Left lung (tissue), 14 donors: ENCODE measurements at regions of chr10 and their contacts with region 1.

Region 1: GRCh38 chr10:29857843-29858701 is 201.3 kb downstream of the JCAD start:
- DNase-seq: peak in 3 of 4 donors; percentile 65 to 80 (median 69)
- ATAC-seq: peak; percentile 92
- H3K4me3 ChIP-seq: no peak overlapping the region
- H3K27ac ChIP-seq: no peak overlapping the region
- H3K4me1 ChIP-seq: peaks cover 9 to 11% of the 10 kb centered on the region in 2 donors
- H3K27me3 ChIP-seq: no peaks in the 10 kb centered on the region
- CTCF ChIP-seq: peak; percentile 58 to 66

Region 2: GRCh38 chr10:29735596-29736318 is 122.3 kb before region 1 on chr10:
- intact Hi-C with region 1: loop called in 1 of 2 experiments (anchors 10 kb)
- DNase-seq: peak; percentile 84 to 99 (median 90)
- ATAC-seq: peak; percentile 94
- H3K4me3 ChIP-seq: peak overlapping the region; percentile 82 to 88
- H3K27ac ChIP-seq: peak overlapping the region; percentile 97 to 99
- H3K4me1 ChIP-seq: peaks cover 5 to 48% of the 10 kb centered on the region in 2 donors
- H3K27me3 ChIP-seq: no peaks in the 10 kb centered on the region
- CTCF ChIP-seq: peak; percentile 92 to 96

Region 3: DNA sequence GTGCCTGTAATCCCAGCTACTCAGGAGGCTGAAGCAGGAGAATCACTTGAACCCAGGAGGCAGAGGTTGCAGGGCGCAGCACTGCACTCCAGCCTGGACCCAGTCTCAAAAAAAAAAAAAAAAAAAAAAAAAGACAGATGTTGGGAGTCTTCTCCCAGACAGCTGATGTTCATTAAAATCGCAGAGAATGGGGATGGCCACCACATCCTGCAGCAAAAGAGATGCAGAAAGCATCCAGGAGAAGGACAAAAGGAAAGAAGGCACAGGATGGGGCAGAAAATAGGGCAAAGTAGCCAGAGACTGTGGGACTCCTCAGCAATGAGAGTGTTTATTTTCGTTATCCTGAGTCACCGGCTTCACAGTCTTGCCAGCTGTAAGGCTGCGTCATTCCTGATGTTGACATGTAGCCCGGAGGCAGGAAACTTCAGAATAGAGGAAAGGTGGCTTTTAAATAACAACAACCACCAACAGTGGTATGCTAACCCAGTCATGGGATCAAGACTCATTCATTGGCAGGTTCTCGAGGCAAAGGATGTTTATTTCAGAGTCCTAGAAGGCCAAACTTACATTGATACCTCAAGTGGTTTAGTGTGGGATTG is 73.8 kb before region 1 on chr10:
- intact Hi-C with region 1: no loop called
- DNase-seq: peak in 2 of 4 donors; percentile 54 to 65
- ATAC-seq: peak; percentile 96
- H3K4me3 ChIP-seq: no peak overlapping the region
- H3K27ac ChIP-seq: peak overlapping the region; percentile 39 to 50
- H3K4me1 ChIP-seq: peaks cover 0 to 18% of the 10 kb centered on the region in 2 donors
- H3K27me3 ChIP-seq: no peaks in the 10 kb centered on the region
- CTCF ChIP-seq: no peak

Region 4: DNA sequence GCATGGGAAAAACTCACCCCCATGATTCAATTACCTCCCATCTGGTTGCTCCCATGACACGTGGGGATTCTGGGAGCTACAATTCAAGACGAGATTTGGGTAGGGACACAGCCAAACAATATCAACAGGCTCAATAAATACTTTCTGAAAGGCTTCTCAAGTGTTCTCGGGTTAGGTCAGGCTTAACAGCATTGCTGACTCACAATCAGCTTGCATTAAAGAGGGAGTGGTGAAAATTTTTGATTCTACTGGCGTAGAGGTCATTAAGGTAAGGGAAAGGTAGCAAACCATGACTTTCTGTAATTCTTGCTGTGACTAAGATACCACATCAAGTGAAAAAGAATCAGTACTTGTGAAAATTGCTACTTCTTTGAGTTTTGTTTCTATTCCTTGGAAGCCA is 74.9 kb after region 1 on chr10:
- intact Hi-C with region 1: no loop called
- DNase-seq: no peak
- ATAC-seq: no peak
- H3K4me3 ChIP-seq: no peak overlapping the region
- H3K27ac ChIP-seq: no peak overlapping the region
- H3K4me1 ChIP-seq: no peaks in the 10 kb centered on the region
- H3K27me3 ChIP-seq: no peaks in the 10 kb centered on the region
- CTCF ChIP-seq: no peak

Region 5: GRCh38 chr10:30182191-30183054 is 324.4 kb after region 1 on chr10:
- intact Hi-C with region 1: no loop called
- DNase-seq: peak in 1 of 4 donors; percentile 44
- ATAC-seq: peak; percentile 87
- H3K4me3 ChIP-seq: no peak overlapping the region
- H3K27ac ChIP-seq: peak overlapping the region in 1 of 2 donors; percentile 26
- H3K4me1 ChIP-seq: peaks cover 13 to 31% of the 10 kb centered on the region in 2 donors
- H3K27me3 ChIP-seq: no peaks in the 10 kb centered on the region
- CTCF ChIP-seq: no peak